ENCODE measurements at regions of chr12 and their contacts with region 1.

Region 1: DNA sequence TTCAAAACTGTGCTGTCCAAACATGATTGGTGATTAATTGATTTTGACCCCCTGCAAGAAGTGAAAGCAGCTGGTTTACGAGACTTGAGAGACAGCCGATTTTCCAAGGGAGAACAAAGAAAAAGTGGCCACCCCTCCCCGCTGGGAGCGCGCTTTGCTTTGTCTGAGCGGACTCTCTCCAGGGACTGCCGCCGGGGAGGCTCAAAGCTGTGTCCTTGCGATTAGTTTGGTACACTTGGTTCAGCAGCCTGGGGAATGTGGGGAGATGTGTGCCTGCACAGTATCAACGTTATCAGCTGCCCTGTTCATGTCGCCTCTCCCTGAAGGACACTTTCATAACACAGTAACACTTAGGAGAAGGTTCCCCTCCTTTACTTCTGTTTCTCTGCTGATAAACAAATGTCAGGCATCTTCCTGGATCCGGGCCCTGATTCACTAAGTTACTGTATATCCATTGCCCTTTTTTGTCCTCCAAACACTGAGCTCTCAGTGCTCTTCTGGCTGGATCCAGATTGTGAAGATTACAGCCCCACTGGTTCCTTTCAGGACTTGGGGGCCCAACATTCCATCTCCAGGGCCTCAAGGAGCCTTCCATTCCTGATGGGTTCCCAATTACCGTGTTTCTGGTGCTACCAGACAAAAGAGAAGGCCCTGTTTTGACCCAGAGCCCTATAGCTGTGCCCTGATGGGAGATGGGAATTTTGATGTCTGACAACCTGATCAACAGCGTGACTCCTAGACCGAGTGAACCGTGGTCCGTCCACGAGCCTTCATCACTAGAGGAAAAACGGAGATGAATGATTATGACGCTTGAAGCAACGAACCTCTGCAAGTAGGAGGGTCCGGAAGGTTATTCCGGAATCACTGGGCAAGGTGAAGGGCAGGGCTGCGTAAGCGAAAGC is 31.7 kb upstream of the TUBA1C start:
- DNase-seq: peak; percentile 33
- H3K4me3 ChIP-seq: no peak overlapping the region
- H3K27ac ChIP-seq: peak overlapping the region; percentile 85
- H3K4me1 ChIP-seq: no peaks in the 10 kb centered on the region
- H3K27me3 ChIP-seq: no peaks in the 10 kb centered on the region
- CTCF ChIP-seq: no peak

Region 2: GRCh38 chr12:49130151-49131050 is 102.8 kb before region 1 on chr12:
- intact Hi-C with region 1: loop called (anchors 5 kb)
- DNase-seq: peak; percentile 94
- H3K4me3 ChIP-seq: peak overlapping the region; percentile 84
- H3K27ac ChIP-seq: peak overlapping the region; percentile 100
- H3K4me1 ChIP-seq: no peaks in the 10 kb centered on the region
- H3K27me3 ChIP-seq: no peaks in the 10 kb centered on the region
- CTCF ChIP-seq: peak; percentile 92

Region 3: GRCh38 chr12:49188914-49189367 is 44.2 kb before region 1 on chr12 and contains the start of gene TUBA1A:
- intact Hi-C with region 1: loop called (anchors 5 kb)
- DNase-seq: peak; percentile 84
- H3K4me3 ChIP-seq: peak within 1 kb of the TSS; percentile 55
- H3K27ac ChIP-seq: peak within 1 kb of the TSS; percentile 89
- H3K4me1 ChIP-seq: peaks cover 4% of the 10 kb centered on the region
- H3K27me3 ChIP-seq: no peaks in the 10 kb centered on the region
- CTCF ChIP-seq: no peak
- total RNA-seq, gene TUBA1A: 16.9 to 70.3 TPM

Region 4: GRCh38 chr12:49200919-49201594 is 32.1 kb before region 1 on chr12:
- intact Hi-C with region 1: no loop called
- DNase-seq: no peak
- H3K4me3 ChIP-seq: no peak overlapping the region
- H3K27ac ChIP-seq: peak overlapping the region; percentile 51
- H3K4me1 ChIP-seq: no peaks in the 10 kb centered on the region
- H3K27me3 ChIP-seq: no peaks in the 10 kb centered on the region
- CTCF ChIP-seq: no peak

Region 5: DNA sequence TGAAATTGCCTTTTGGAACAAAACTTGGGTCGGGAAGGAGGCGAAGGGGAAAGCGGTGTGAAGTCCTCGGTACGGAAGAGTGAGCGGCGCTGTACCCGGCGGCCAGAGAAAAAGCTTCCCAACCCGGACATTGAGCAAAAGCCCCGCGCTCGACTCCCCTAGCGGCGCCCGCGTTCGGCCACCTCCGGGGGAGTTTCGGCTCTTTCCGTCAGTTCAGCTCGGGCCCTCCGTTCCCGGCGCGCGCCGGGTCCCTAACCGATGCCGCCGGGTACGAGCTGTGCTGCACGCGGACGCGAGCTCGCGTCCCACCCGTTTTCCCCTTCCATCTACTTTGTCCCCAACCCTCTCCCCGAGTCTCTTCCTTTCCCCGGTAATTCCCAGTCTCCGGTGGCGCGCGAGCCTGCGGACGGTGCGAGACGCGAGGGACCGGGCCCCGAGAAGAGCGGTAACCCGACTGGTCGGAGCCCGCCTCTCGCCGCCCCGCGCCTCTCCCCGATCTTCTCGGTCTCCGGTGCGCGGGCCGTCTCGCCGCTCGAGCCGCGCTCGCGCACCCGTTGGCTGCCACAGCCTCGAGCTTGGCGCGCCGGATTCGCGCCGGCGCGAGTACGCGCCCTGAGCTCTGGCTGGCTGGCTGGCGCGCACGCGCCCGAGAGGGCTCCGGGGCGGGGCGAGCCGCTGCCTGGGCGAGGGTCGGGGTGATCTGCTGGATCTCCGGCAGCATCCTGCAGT is 133.6 kb after region 1 on chr12:
- intact Hi-C with region 1: no loop called
- DNase-seq: peak; percentile 90
- H3K4me3 ChIP-seq: peak overlapping the region; percentile 85
- H3K27ac ChIP-seq: peak overlapping the region; percentile 83
- H3K4me1 ChIP-seq: peaks cover 5% of the 10 kb centered on the region
- H3K27me3 ChIP-seq: no peaks in the 10 kb centered on the region
- CTCF ChIP-seq: no peak

Region 6: GRCh38 chr12:49451468-49452259 is 218.5 kb after region 1 on chr12:
- intact Hi-C with region 1: no loop called
- DNase-seq: no peak
- H3K4me3 ChIP-seq: no peak overlapping the region
- H3K27ac ChIP-seq: no peak overlapping the region
- H3K4me1 ChIP-seq: no peaks in the 10 kb centered on the region
- H3K27me3 ChIP-seq: no peaks in the 10 kb centered on the region
- CTCF ChIP-seq: no peak